ENCODE measurements at regions of chr4 and their contacts with region 1.

Region 1: DNA sequence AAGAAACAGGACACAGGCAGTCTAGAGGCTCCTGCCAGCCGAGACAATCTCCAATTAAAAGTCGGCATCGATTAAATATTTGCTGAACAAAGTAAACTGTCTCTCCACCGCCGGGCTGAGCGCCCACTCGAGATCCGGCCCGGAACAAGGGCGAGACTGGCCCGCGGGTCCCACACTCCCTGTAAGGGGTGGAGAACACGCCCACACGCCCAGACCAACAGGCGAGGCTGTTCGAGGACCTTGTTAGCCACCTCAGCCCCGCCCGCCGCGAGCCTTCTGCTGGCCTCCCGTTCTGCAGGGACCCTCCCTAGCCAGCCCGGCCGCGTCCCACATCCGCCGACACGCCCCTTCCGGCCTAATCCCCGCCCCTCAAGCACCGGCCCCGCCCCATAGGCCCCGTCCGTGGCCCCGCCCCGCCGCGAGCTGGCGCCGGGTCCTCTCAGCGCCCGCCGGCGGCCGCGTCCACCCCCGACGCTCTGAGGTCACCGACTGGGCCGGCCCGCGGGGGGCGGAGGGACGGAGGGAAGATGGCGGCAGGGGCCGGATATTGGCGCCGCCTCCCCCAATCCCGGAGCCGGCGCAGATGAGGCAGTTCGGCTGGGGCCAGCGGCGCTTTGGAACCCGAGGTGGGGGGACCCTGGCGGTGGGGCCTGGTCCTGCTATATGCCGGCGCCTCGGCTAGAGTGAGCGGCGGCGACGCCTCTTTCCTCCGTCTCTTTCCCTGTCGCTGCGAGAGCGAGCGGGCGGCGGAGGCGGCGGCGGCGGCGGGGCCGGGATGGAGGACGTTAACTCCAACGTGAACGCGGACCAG is at the start of gene SLAIN2:
- DNase-seq: peak; percentile 89 to 100 (median 94)
- ATAC-seq: peak; percentile 85 to 95 (median 88)
- H3K4me3 ChIP-seq: peak within 1 kb of the TSS; percentile 85 to 94
- H3K4me3 Mint-ChIP-seq: peak within 1 kb of the TSS; percentile 94 to 96 (median 94)
- H3K27ac ChIP-seq: peak within 1 kb of the TSS; percentile 92
- H3K27ac Mint-ChIP-seq: peak within 1 kb of the TSS; percentile 93 to 98
- H3K4me1 ChIP-seq: peaks cover 16 to 35% of the 10 kb centered on the region in 2 experiments
- H3K4me1 Mint-ChIP-seq: peaks cover 44 to 55% (median 45%) of the 10 kb centered on the region in 3 donors
- H3K27me3 ChIP-seq: no peaks in the 10 kb centered on the region
- H3K27me3 Mint-ChIP-seq: no peaks in the 10 kb centered on the region
- total RNA-seq, gene SLAIN2: 61.5 to 75.2 (median 70.5) TPM

Region 2: DNA sequence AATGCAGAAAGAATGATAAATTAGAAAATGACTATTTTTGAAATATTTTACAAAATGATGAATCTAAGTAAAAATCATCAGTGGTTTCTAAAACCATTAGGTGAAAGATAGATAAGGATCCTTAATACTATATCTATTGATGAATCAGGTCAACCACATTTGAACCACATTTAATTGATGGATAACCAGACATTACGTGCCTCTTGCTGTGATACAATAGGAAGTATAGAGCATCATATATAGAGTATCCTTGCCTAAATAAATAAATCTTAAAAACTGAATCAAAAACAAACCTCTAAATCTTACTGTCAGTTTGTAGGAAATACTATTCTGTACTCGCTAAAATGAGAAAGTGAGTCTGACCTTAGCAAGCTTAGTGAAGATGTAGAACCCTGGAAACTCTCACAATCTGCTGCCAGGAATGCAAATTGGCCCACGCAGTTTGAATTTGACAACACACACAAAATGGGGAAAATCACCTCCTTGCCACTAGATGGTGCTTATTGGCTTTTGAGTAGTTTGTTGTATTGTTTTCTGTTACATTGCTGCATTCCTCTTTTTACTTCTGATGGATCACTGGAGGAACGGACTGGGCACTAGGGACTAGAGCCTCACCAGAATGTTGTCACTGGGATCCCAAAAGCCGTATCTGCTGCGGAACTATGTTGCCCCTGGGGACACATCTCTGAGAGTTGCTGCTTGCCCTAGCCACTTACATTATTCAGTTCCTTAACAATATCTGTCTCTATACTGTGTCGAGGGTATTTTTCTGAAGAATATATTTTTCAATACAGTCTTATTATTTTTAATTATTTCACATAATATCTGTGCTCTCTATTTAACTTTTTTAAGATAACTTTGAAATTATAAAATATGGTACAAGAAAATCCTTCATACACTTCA is 25.2 kb before region 1 on chr4:
- CTCF ChIA-PET with region 1: interaction called, 3 to 12 read pairs
- POLR2A ChIA-PET with region 1: interaction called, 3 to 4 read pairs
- DNase-seq: peak in 8 of 35 experiments; percentile 2 to 65 (median 8)
- ATAC-seq: peak in 2 of 4 experiments; percentile 56 to 58
- H3K4me3 ChIP-seq: no peak overlapping the region
- H3K4me3 Mint-ChIP-seq: no peak overlapping the region
- H3K27ac ChIP-seq: no peak overlapping the region
- H3K27ac Mint-ChIP-seq: peak overlapping the region in 1 of 2 donors; percentile 25
- H3K4me1 ChIP-seq: no peaks in the 10 kb centered on the region
- H3K4me1 Mint-ChIP-seq: no peaks in the 10 kb centered on the region
- H3K27me3 ChIP-seq: no peaks in the 10 kb centered on the region
- H3K27me3 Mint-ChIP-seq: no peaks in the 10 kb centered on the region

Region 3: DNA sequence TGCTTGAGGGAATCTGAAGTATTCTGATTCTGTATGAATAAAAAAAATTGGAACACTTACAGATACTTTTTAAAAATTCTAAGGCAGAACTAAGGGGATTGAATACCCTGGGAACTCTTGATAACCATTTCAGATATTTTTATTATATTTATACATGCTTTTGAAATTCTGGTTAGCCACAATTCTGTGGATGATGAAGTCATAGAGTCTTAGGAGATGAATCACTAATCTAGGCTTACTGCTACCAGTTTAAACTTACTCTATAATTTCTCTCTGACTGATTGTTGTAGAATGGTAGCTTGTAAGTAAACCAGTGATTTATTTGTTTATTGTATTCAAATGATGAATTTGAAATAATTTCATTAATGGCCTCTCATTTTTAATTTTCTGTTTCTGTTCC is 11.2 kb before region 1 on chr4:
- CTCF ChIA-PET with region 1: no interaction called
- POLR2A ChIA-PET with region 1: no interaction called
- DNase-seq: no peak
- ATAC-seq: no peak
- H3K4me3 ChIP-seq: no peak overlapping the region
- H3K4me3 Mint-ChIP-seq: no peak overlapping the region
- H3K27ac ChIP-seq: no peak overlapping the region
- H3K27ac Mint-ChIP-seq: no peak overlapping the region
- H3K4me1 ChIP-seq: no peaks in the 10 kb centered on the region
- H3K4me1 Mint-ChIP-seq: peaks cover 0 to 2% (median 0%) of the 10 kb centered on the region in 3 donors
- H3K27me3 ChIP-seq: peaks cover 0 to 5% of the 10 kb centered on the region in 2 experiments
- H3K27me3 Mint-ChIP-seq: peaks cover 4% of the 10 kb centered on the region in 2 donors

Region 4: DNA sequence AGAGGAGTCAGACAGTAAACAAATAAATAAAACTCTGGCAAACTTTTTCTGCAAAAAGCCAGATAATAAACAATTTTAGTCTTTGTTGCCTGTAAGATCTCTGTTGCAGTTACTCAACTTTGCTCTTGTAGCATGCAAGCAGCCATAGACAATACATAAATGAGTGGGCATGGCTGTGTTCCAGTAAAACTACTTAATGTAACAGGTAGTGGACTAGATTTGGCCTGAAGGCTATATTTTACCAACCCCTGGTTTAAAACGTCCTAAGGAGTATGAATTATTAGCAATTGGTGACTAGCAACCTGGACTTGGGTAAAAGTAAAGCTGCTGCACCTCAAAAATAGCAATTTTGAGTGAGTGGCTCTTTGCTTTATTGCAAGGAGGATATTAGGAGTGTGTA is 31.1 kb after region 1 on chr4:
- CTCF ChIA-PET with region 1: interaction called, 3 to 4 read pairs
- POLR2A ChIA-PET with region 1: interaction called in 1 of 2 experiments, 13 read pairs
- DNase-seq: no peak
- ATAC-seq: no peak
- H3K4me3 ChIP-seq: no peak overlapping the region
- H3K4me3 Mint-ChIP-seq: no peak overlapping the region
- H3K27ac ChIP-seq: no peak overlapping the region
- H3K27ac Mint-ChIP-seq: no peak overlapping the region
- H3K4me1 ChIP-seq: no peaks in the 10 kb centered on the region
- H3K4me1 Mint-ChIP-seq: peaks cover 40 to 59% (median 43%) of the 10 kb centered on the region in 3 donors
- H3K27me3 ChIP-seq: no peaks in the 10 kb centered on the region
- H3K27me3 Mint-ChIP-seq: no peaks in the 10 kb centered on the region

Region 5: DNA sequence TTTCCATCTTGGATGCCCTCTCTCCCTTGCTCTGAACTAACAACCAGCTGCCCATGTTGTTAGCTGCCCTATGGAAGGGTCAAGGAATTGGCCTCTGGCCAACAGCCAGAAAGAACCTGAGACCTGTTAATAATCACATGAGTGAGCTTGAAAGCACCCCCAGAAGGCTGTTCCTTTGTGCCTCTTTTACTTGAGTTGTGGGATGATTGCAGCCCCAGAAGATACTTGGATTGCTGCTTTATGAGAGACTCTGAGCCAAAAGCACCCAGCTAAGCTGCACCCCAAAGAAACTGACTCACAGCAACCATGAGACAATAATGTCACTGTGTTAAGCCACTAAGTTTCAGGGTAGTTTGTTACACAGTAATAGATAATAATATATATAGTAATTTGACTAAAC is 365.6 kb after region 1 on chr4:
- CTCF ChIA-PET with region 1: no interaction called
- POLR2A ChIA-PET with region 1: no interaction called
- DNase-seq: no peak
- ATAC-seq: no peak
- H3K4me3 ChIP-seq: no peak overlapping the region
- H3K4me3 Mint-ChIP-seq: no peak overlapping the region
- H3K27ac ChIP-seq: no peak overlapping the region
- H3K27ac Mint-ChIP-seq: no peak overlapping the region
- H3K4me1 ChIP-seq: no peaks in the 10 kb centered on the region
- H3K4me1 Mint-ChIP-seq: peaks cover 28 to 35% (median 34%) of the 10 kb centered on the region in 3 donors
- H3K27me3 ChIP-seq: no peaks in the 10 kb centered on the region
- H3K27me3 Mint-ChIP-seq: no peaks in the 10 kb centered on the region

Measured in T-cell (primary cell).